Activated naive CD4-positive, alpha-beta T cell treated with anti-CD3 and anti-CD28 coated beads for 36 hours (primary cell): ENCODE measurements at regions of chr4 and their contacts with region 1.

Region 1: DNA sequence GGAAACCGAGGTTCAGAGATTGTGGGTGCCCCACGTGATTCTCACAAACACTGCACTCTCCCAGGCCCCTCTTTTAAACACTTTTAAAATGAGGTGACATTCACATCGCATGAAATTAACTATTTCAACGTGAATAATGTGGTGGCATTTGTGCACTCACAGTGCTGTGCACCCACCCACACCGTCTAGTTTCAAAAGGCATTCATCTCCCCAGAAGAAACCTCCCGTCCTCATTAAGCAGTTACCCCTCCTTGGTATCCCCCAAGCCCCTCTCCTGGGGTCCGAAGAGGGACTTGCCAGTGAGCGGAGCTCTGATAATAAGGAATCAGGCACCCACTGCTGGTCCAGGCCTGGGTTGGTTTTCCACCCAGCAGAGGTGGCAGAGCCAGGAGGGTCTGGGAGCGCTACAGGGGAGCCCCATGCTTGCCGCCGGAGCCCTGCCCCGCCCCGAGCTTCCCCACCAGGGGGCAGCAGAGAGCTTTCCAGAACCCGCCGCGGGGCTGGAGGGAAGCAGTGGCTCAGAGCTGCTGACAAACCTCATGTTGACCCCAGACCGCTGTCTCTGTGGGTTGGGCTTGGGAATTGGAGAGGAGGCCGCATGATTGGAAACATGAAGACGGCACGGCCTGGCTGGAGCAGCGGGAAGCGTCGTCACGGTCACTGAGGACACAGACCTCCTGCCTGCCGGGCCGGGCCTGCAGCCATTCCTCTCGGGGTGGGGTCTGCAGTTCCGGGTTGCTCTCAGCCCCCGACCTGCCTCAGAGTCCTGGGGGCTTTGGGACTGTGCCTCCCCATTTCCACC is 27.5 kb upstream of the HTRA3 start:
- DNase-seq: peak; percentile 83
- H3K4me3 Mint-ChIP-seq: no peak overlapping the region
- H3K27ac Mint-ChIP-seq: no peak overlapping the region
- H3K4me1 Mint-ChIP-seq: no peaks in the 10 kb centered on the region
- H3K27me3 Mint-ChIP-seq: no peaks in the 10 kb centered on the region

Region 2: DNA sequence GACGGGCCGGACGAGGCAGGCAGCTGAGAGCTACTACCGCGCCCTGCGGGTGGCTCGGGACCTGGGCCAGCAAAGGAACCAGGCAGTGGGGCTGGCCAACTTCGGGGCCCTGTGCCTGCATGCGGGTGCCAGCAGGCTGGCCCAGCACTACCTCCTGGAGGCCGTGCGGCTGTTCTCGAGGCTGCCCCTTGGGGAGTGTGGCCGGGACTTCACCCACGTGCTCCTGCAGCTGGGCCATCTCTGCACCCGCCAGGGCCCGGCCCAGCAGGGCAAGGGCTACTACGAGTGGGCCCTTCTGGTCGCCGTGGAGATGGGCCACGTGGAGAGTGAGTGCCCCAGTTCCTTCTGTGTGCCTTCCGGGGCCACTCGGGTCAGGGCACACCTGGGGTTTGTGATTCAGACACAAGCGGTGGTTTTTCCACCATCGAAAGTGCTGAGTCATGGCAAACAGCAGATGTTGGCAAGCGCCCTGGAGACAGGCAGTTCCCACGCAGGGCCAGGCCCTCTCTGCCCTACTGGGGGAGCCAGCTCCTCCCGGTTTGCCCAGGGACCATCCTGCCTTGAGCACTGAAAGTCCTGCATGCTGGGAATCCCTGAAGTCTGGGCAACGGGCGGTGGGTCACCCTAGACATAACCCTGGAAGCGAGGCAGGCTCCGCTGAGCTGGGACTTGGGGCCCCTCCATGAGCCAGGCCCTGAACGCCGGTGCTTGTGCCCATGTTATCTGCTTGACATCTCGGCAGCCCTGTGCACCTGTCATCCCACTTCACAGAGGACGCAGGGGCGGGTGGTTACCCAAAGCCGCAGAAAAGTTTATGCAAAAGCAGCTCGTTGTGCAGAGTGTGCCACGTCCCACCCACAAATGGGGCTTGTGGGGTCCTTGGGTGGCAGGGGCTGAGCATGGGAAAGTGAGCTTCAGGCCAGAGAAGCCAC is 13.5 kb before region 1 on chr4:
- CTCF ChIA-PET with region 1: interaction called, 10 read pairs
- intact Hi-C with region 1: no loop called
- DNase-seq: peak; percentile 96
- H3K4me3 Mint-ChIP-seq: no peak overlapping the region
- H3K27ac Mint-ChIP-seq: no peak overlapping the region
- H3K4me1 Mint-ChIP-seq: peaks cover 23% of the 10 kb centered on the region
- H3K27me3 Mint-ChIP-seq: no peaks in the 10 kb centered on the region

Region 3: GRCh38 chr4:8324640-8325239 is 82.6 kb after region 1 on chr4:
- CTCF ChIA-PET with region 1: no interaction called
- intact Hi-C with region 1: no loop called
- DNase-seq: no peak
- H3K4me3 Mint-ChIP-seq: no peak overlapping the region
- H3K27ac Mint-ChIP-seq: no peak overlapping the region
- H3K4me1 Mint-ChIP-seq: no peaks in the 10 kb centered on the region
- H3K27me3 Mint-ChIP-seq: no peaks in the 10 kb centered on the region

Region 4: GRCh38 chr4:8403173-8403753 is 161.2 kb after region 1 on chr4:
- CTCF ChIA-PET with region 1: interaction called, 24 read pairs
- intact Hi-C with region 1: loop called (anchors 1 kb)
- DNase-seq: peak; percentile 69
- H3K4me3 Mint-ChIP-seq: no peak overlapping the region
- H3K27ac Mint-ChIP-seq: no peak overlapping the region
- H3K4me1 Mint-ChIP-seq: no peaks in the 10 kb centered on the region
- H3K27me3 Mint-ChIP-seq: no peaks in the 10 kb centered on the region

Region 5: GRCh38 chr4:8594097-8595038 is 352.3 kb after region 1 on chr4:
- CTCF ChIA-PET with region 1: no interaction called
- intact Hi-C with region 1: loop called (anchors 1 kb)
- DNase-seq: peak; percentile 45
- H3K4me3 Mint-ChIP-seq: no peak overlapping the region
- H3K27ac Mint-ChIP-seq: no peak overlapping the region
- H3K4me1 Mint-ChIP-seq: no peaks in the 10 kb centered on the region
- H3K27me3 Mint-ChIP-seq: peaks cover 12% of the 10 kb centered on the region